ENCODE measurements at regions of chr6 and their contacts with region 1.

Region 1: DNA sequence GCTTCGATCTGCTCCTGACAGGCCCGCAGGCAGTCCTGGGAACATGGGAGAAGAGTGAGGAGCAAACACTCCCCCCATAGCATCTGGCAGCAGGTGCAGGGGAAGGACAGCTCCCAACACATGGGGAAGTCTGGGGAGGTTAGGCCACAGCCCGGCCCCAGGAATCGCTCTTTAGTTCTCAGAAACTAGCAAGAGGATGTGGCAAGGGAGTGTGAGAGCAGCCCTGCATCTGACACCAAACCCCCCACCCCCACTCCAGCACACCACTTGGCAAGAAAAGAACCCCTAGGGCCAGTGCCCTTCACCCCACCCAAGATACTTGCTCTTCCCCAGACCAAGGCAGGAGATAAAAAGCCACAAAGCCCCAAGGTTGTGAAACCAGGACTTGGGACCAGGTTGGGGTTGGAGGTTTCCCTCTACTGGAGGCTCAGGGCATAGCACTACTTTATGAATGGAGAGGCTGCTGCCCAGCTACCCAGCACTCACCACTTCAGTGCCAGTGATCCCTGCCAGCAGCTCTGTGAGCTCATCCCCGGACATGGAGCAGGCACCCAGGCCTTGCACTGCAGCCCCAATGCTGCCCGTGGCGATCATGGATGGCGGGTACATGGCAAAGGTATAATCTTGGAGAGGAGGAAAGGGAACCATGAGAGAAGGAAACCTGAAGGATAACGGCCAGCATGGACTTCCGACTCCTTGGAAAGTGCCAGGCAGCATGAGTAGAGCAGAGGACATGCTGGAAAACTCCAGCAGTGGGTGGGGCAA is 5.4 kb downstream of the CCND3 start:
- DNase-seq: peak; percentile 65
- H3K4me3 ChIP-seq: no peak overlapping the region
- H3K27ac ChIP-seq: peak overlapping the region; percentile 47
- H3K27me3 ChIP-seq: no peaks in the 10 kb centered on the region
- CTCF ChIP-seq: peak; percentile 94

Region 2: GRCh38 chr6:41779793-41780545 is 156.3 kb before region 1 on chr6 and contains the start of gene FRS3:
- CTCF ChIA-PET with region 1: no interaction called
- POLR2A ChIA-PET with region 1: no interaction called
- DNase-seq: peak; percentile 87
- H3K4me3 ChIP-seq: peak within 1 kb of the TSS; percentile 78
- H3K27ac ChIP-seq: no peak within 1 kb of the TSS
- H3K27me3 ChIP-seq: no peaks in the 10 kb centered on the region
- CTCF ChIP-seq: peak; percentile 92
- polyA plus RNA-seq, gene FRS3: 2.2 and 2.6 TPM in 2 replicates

Region 3: GRCh38 chr6:41801380-41801779 is 134.9 kb before region 1 on chr6:
- CTCF ChIA-PET with region 1: interaction called, 27 read pairs
- POLR2A ChIA-PET with region 1: no interaction called
- DNase-seq: no peak
- H3K4me3 ChIP-seq: no peak overlapping the region
- H3K27ac ChIP-seq: no peak overlapping the region
- H3K27me3 ChIP-seq: no peaks in the 10 kb centered on the region
- CTCF ChIP-seq: peak; percentile 81